CD8-positive, alpha-beta T cell (primary cell): ENCODE measurements at regions of chr16 and their contacts with region 1.

Region 1: GRCh38 chr16:57084257-57084770 is 8.1 kb upstream of the CPNE2 start:
- DNase-seq: peak; percentile 58 to 92 (median 80)
- ATAC-seq: peak; percentile 98
- H3K4me3 ChIP-seq: no peak overlapping the region
- H3K4me3 Mint-ChIP-seq: no peak overlapping the region
- H3K27ac ChIP-seq: peak overlapping the region; percentile 59 to 69
- H3K27ac Mint-ChIP-seq: peak overlapping the region; percentile 92
- H3K4me1 ChIP-seq: peaks cover 11% of the 10 kb centered on the region
- H3K4me1 Mint-ChIP-seq: peaks cover 14% of the 10 kb centered on the region
- H3K27me3 ChIP-seq: no peaks in the 10 kb centered on the region
- H3K27me3 Mint-ChIP-seq: no peaks in the 10 kb centered on the region
- CTCF ChIP-seq: peak; percentile 96

Region 2: GRCh38 chr16:57045694-57046381 is 38.5 kb before region 1 on chr16:
- CTCF ChIA-PET with region 1: interaction called, 3 read pairs
- POLR2A ChIA-PET with region 1: no interaction called
- intact Hi-C with region 1: loop called in 1 of 2 experiments (anchors 5 kb)
- DNase-seq: peak in 8 of 9 experiments; percentile 27 to 76 (median 58)
- ATAC-seq: peak; percentile 5
- H3K4me3 ChIP-seq: no peak overlapping the region
- H3K4me3 Mint-ChIP-seq: peak overlapping the region; percentile 50
- H3K27ac ChIP-seq: peak overlapping the region; percentile 2 to 59
- H3K27ac Mint-ChIP-seq: peak overlapping the region; percentile 93
- H3K4me1 ChIP-seq: peaks cover 52% of the 10 kb centered on the region
- H3K4me1 Mint-ChIP-seq: peaks cover 54% of the 10 kb centered on the region
- H3K27me3 ChIP-seq: no peaks in the 10 kb centered on the region
- H3K27me3 Mint-ChIP-seq: no peaks in the 10 kb centered on the region
- CTCF ChIP-seq: peak; percentile 38

Region 3: GRCh38 chr16:57071831-57072582 is 12.3 kb before region 1 on chr16:
- CTCF ChIA-PET with region 1: interaction called, 23 read pairs
- POLR2A ChIA-PET with region 1: interaction called, 5 read pairs
- intact Hi-C with region 1: no loop called
- DNase-seq: peak in 2 of 9 experiments; percentile 39 to 66
- ATAC-seq: peak; percentile 14
- H3K4me3 ChIP-seq: no peak overlapping the region
- H3K4me3 Mint-ChIP-seq: no peak overlapping the region
- H3K27ac ChIP-seq: peak overlapping the region; percentile 15 to 59
- H3K27ac Mint-ChIP-seq: peak overlapping the region; percentile 64
- H3K4me1 ChIP-seq: peaks cover 9% of the 10 kb centered on the region
- H3K4me1 Mint-ChIP-seq: peaks cover 18% of the 10 kb centered on the region
- H3K27me3 ChIP-seq: no peaks in the 10 kb centered on the region
- H3K27me3 Mint-ChIP-seq: no peaks in the 10 kb centered on the region
- CTCF ChIP-seq: no peak

Region 4: DNA sequence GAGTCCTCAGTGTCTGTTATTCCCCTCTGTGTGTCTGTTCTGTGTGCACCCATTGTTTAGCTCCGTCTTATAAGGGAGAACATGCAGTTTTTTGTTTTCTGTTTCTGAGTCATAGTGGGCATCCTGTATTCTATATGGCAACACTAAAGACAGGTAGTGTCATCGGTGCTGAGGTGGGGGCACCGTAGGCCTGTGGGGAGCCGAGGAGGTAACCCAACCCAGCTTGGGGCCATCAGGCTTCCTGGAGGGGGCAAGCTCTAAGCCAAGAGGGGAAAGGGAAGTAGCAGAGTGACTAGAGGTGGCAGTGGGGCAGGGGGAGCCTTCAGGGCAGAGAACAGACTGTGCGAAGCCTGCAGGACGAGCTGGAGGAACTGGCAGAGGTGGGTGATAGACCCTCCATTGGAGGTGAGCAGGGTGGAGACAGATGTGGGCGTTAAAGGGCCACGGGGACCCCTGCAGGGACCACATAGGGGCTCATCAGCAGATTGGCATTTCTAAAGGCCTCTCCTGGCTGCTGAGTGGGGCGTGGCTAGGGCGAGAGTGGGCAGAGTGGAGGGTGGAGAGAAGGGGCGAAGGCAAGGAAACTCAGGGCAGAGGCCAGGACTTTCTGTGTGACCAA is 44.6 kb after region 1 on chr16:
- CTCF ChIA-PET with region 1: interaction called, 14 read pairs
- POLR2A ChIA-PET with region 1: interaction called, 3 read pairs
- intact Hi-C with region 1: no loop called
- DNase-seq: peak in 8 of 9 experiments; percentile 53 to 88 (median 70)
- ATAC-seq: peak; percentile 89
- H3K4me3 ChIP-seq: peak overlapping the region; percentile 42 to 44
- H3K4me3 Mint-ChIP-seq: peak overlapping the region; percentile 83
- H3K27ac ChIP-seq: peak overlapping the region; percentile 45 to 71
- H3K27ac Mint-ChIP-seq: peak overlapping the region; percentile 97
- H3K4me1 ChIP-seq: peaks cover 92% of the 10 kb centered on the region
- H3K4me1 Mint-ChIP-seq: peaks cover 92% of the 10 kb centered on the region
- H3K27me3 ChIP-seq: no peaks in the 10 kb centered on the region
- H3K27me3 Mint-ChIP-seq: no peaks in the 10 kb centered on the region
- CTCF ChIP-seq: no peak

Region 5: GRCh38 chr16:57147381-57148221 is 63.3 kb after region 1 on chr16:
- CTCF ChIA-PET with region 1: interaction called, 28 read pairs
- POLR2A ChIA-PET with region 1: no interaction called
- intact Hi-C with region 1: no loop called
- DNase-seq: no peak
- ATAC-seq: no peak
- H3K4me3 ChIP-seq: no peak overlapping the region
- H3K4me3 Mint-ChIP-seq: no peak overlapping the region
- H3K27ac ChIP-seq: no peak overlapping the region
- H3K27ac Mint-ChIP-seq: peak overlapping the region; percentile 64
- H3K4me1 ChIP-seq: peaks cover 34% of the 10 kb centered on the region
- H3K4me1 Mint-ChIP-seq: peaks cover 32% of the 10 kb centered on the region
- H3K27me3 ChIP-seq: no peaks in the 10 kb centered on the region
- H3K27me3 Mint-ChIP-seq: no peaks in the 10 kb centered on the region
- CTCF ChIP-seq: no peak

Region 6: DNA sequence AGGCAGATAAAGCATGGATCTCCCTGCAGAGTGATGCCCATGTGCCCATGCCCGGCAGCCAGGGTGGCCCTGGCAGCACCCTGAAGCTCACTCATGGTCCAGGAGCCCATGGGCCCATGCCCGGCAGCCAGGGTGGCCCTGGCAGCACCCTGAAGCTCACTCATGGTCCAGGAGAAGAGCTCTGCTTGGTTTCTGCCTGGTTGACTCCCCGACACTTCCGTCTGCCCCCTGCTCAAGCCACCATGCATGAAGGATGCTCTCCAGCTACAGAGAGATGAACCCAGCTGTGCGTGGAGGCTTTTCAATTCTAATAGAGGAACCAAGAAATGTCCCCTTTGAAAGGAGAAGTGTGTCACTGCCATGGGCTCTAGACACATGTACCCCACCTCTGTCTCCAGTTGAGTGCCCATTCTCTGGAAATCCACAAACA is 329.0 kb after region 1 on chr16:
- CTCF ChIA-PET with region 1: interaction called, 5 read pairs
- POLR2A ChIA-PET with region 1: no interaction called
- intact Hi-C with region 1: loop called (anchors 2 to 10 kb)
- DNase-seq: peak in 1 of 9 experiments; percentile 22
- ATAC-seq: no peak
- H3K4me3 ChIP-seq: no peak overlapping the region
- H3K4me3 Mint-ChIP-seq: no peak overlapping the region
- H3K27ac ChIP-seq: no peak overlapping the region
- H3K27ac Mint-ChIP-seq: no peak overlapping the region
- H3K4me1 ChIP-seq: peaks cover 18% of the 10 kb centered on the region
- H3K4me1 Mint-ChIP-seq: peaks cover 9% of the 10 kb centered on the region
- H3K27me3 ChIP-seq: no peaks in the 10 kb centered on the region
- H3K27me3 Mint-ChIP-seq: peaks cover 4% of the 10 kb centered on the region
- CTCF ChIP-seq: no peak